ENCODE measurements at regions of chr10 and their contacts with region 1.

Region 1: GRCh38 chr10:3136763-3137611 is 35.6 kb downstream of the PITRM1 start:
- DNase-seq: no peak
- H3K4me3 ChIP-seq: peak overlapping the region in 1 of 3 donors; percentile 31
- H3K27ac ChIP-seq: peak overlapping the region in 1 of 2 donors; percentile 70
- H3K4me1 ChIP-seq: no peaks in the 10 kb centered on the region
- H3K27me3 ChIP-seq: no peaks in the 10 kb centered on the region
- CTCF ChIP-seq: no peak
- POLR2A ChIP-seq: no peak

Region 2: GRCh38 chr10:3162533-3162932 is 25.5 kb after region 1 on chr10:
- intact Hi-C with region 1: loop called (anchors 1 kb)
- DNase-seq: no peak
- H3K4me3 ChIP-seq: no peak overlapping the region
- H3K27ac ChIP-seq: no peak overlapping the region
- H3K4me1 ChIP-seq: no peaks in the 10 kb centered on the region
- H3K27me3 ChIP-seq: no peaks in the 10 kb centered on the region
- CTCF ChIP-seq: no peak
- POLR2A ChIP-seq: no peak

Measured in breast epithelium (tissue), 4 donors.